GM12878 (cell line): ENCODE measurements at regions of chr17 and their contacts with region 1.

Region 1: DNA sequence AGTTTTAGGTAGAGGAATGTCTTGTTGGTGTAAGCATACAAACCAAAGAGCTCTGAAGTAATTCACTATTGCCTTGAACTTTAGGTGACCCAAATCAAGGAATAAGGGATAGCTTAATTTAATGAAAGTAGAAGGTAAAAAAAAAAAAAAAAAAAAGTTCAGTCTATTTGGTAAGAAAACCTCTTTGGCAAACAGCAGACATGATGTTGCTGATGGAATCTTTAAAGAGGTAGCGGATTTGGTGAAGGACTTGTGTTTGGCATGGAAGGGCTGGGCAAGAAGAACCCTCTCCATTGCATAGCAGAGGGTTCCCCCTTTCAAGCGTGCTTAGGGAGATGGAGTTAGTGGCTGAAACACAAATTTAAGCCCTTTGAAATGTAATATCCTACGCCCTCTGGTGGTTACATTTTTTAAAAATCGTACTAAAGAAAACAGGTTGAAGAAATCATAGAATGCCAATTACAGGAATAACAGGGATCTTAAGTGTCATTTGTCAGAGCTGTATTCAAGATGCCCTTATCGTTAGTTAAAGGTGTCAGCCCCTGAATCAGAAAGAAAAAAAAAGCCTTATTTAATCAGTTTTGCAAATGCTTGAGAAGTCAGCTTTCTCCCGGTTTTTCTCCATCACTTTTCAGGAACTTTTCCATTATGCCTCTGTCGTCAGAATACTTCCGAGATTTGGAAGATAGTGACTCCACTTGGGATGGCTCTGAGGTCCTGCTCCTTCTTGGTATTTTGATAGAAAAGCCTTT is 383.1 kb downstream of the KCNJ2 start:
- DNase-seq: peak; percentile 13
- ATAC-seq: peak; percentile 68
- H3K4me3 ChIP-seq: no peak overlapping the region
- H3K27ac ChIP-seq: no peak overlapping the region
- H3K4me1 ChIP-seq: no peaks in the 10 kb centered on the region
- H3K27me3 ChIP-seq: no peaks in the 10 kb centered on the region
- CTCF ChIP-seq: peak; percentile 24 to 54 (median 31); a peak in 4 of 6 replicates
- EP300 ChIP-seq: no peak
- POLR2A ChIP-seq: no peak
- RAD21 ChIP-seq: peak; percentile 64

Region 2: DNA sequence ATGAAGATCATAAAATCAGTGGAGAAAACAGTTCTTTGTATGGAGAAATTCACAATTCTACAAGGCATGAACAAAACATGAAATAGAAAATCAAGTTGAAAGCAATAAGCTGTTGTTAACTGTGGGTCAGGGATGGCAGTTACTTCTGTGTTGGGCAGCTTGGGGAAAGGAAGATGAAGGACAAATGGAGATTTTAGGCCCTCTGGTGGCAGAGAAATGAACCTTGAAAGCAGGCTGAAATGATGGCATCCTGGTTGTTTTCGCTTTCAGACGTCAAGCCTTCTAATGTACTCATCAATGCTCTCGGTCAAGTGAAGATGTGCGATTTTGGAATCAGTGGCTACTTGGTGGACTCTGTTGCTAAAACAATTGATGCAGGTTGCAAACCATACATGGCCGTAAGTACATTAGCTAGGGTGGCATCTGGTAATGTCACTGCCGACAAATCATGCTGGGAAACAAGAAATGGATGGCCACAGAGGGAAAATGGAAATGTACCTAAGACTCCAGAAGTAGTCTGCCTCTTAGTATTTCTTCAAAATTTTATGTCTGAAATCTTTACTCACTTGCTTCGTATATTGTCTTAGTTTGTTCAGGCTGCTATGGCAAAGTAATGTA is 1029.1 kb before region 1 on chr17:
- CTCF ChIA-PET with region 1: interaction called, 14 read pairs
- POLR2A ChIA-PET with region 1: no interaction called
- RAD21 ChIA-PET with region 1: interaction called, 3 read pairs
- SMC1A ChIA-PET with region 1: interaction called, 5 read pairs
- in situ Hi-C with region 1: no loop called
- intact Hi-C with region 1: loop called (anchors 5 kb)
- DNase-seq: peak; percentile 55
- ATAC-seq: peak; percentile 91
- H3K4me3 ChIP-seq: no peak overlapping the region
- H3K27ac ChIP-seq: no peak overlapping the region
- H3K4me1 ChIP-seq: peaks cover 10% of the 10 kb centered on the region; the same call in 1 of the 2 replicates
- H3K27me3 ChIP-seq: no peaks in the 10 kb centered on the region
- CTCF ChIP-seq: peak; percentile 73 to 76 (median 74)
- EP300 ChIP-seq: no peak
- POLR2A ChIP-seq: no peak
- RAD21 ChIP-seq: peak; percentile 84

Region 3: GRCh38 chr17:69607162-69607834 is 945.1 kb before region 1 on chr17:
- CTCF ChIA-PET with region 1: interaction called, 76 read pairs
- POLR2A ChIA-PET with region 1: no interaction called
- RAD21 ChIA-PET with region 1: interaction called, 40 read pairs
- SMC1A ChIA-PET with region 1: interaction called, 51 read pairs
- in situ Hi-C with region 1: no loop called
- intact Hi-C with region 1: loop called (anchors 5 kb)
- DNase-seq: peak; percentile 45
- ATAC-seq: peak; percentile 96
- H3K4me3 ChIP-seq: no peak overlapping the region
- H3K27ac ChIP-seq: peak overlapping the region; percentile 50; the same call in 1 of the 2 replicates
- H3K4me1 ChIP-seq: peaks cover 2% of the 10 kb centered on the region; the same call in 1 of the 2 replicates
- H3K27me3 ChIP-seq: no peaks in the 10 kb centered on the region
- CTCF ChIP-seq: peak; percentile 75 to 86 (median 85)
- EP300 ChIP-seq: no peak
- POLR2A ChIP-seq: no peak
- RAD21 ChIP-seq: peak; percentile 82

Region 4: GRCh38 chr17:70144260-70144846 is 408.1 kb before region 1 on chr17:
- CTCF ChIA-PET with region 1: interaction called, 21 read pairs
- POLR2A ChIA-PET with region 1: no interaction called
- RAD21 ChIA-PET with region 1: interaction called, 5 read pairs
- SMC1A ChIA-PET with region 1: interaction called, 12 read pairs
- in situ Hi-C with region 1: no loop called
- intact Hi-C with region 1: loop called (anchors 5 kb)
- DNase-seq: no peak
- ATAC-seq: no peak
- H3K4me3 ChIP-seq: no peak overlapping the region
- H3K27ac ChIP-seq: no peak overlapping the region
- H3K4me1 ChIP-seq: no peaks in the 10 kb centered on the region
- H3K27me3 ChIP-seq: no peaks in the 10 kb centered on the region
- CTCF ChIP-seq: peak; percentile 44 to 58 (median 45); a peak in 4 of 6 replicates
- EP300 ChIP-seq: no peak
- POLR2A ChIP-seq: no peak
- RAD21 ChIP-seq: peak; percentile 62

Region 5: DNA sequence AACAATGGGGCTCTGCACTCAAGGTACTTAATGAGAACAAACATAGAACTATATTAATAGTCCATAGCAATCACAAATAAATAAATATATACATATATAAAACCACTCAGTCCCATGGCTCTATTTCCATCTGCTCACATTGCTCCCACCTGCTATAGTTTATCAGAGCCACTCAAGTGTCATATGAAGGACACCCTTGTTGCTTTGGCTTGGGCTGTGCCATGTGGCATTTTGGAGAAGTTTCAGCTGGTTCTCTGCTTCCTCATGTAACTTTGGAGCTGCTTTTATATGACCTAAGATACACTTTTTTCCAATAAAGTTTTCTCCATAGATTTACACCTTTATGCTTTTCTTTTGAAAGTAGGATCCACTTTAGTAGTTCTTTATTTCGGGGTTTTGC is 256.7 kb before region 1 on chr17:
- CTCF ChIA-PET with region 1: no interaction called
- POLR2A ChIA-PET with region 1: no interaction called
- RAD21 ChIA-PET with region 1: interaction called, 4 read pairs
- SMC1A ChIA-PET with region 1: interaction called, 11 read pairs
- in situ Hi-C with region 1: no loop called
- intact Hi-C with region 1: no loop called
- DNase-seq: no peak
- ATAC-seq: no peak
- H3K4me3 ChIP-seq: no peak overlapping the region
- H3K27ac ChIP-seq: no peak overlapping the region
- H3K4me1 ChIP-seq: no peaks in the 10 kb centered on the region
- H3K27me3 ChIP-seq: no peaks in the 10 kb centered on the region
- CTCF ChIP-seq: no peak
- EP300 ChIP-seq: no peak
- POLR2A ChIP-seq: no peak
- RAD21 ChIP-seq: no peak

Region 6: DNA sequence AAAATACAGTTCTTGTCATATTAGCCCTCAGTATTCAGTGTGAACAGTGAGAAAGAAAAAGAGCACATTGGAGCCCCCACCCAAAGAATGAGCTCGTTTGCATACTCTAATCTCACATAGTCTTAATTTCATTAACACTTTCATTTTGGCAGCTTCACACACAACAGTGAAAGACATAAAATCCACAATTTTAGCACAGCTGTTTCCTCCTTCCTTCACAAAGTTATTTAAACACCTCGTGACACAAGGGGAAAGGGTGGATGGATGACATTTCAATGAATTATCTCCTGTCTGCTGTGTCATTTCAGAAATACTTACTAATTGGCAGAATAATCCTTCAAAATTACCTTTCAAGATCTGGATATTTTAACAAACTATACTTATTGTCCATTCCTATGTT is 83.7 kb before region 1 on chr17:
- CTCF ChIA-PET with region 1: interaction called, 3 read pairs
- POLR2A ChIA-PET with region 1: no interaction called
- RAD21 ChIA-PET with region 1: no interaction called
- SMC1A ChIA-PET with region 1: interaction called, 12 read pairs
- in situ Hi-C with region 1: no loop called
- intact Hi-C with region 1: no loop called
- DNase-seq: no peak
- ATAC-seq: no peak
- H3K4me3 ChIP-seq: no peak overlapping the region
- H3K27ac ChIP-seq: no peak overlapping the region
- H3K4me1 ChIP-seq: no peaks in the 10 kb centered on the region
- H3K27me3 ChIP-seq: no peaks in the 10 kb centered on the region
- CTCF ChIP-seq: no peak
- EP300 ChIP-seq: no peak
- POLR2A ChIP-seq: no peak
- RAD21 ChIP-seq: no peak

Region 7: GRCh38 chr17:70582777-70583176 is 30.4 kb after region 1 on chr17:
- CTCF ChIA-PET with region 1: no interaction called
- POLR2A ChIA-PET with region 1: no interaction called
- RAD21 ChIA-PET with region 1: no interaction called
- SMC1A ChIA-PET with region 1: no interaction called
- in situ Hi-C with region 1: no loop called
- intact Hi-C with region 1: no loop called
- DNase-seq: no peak
- ATAC-seq: no peak
- H3K4me3 ChIP-seq: no peak overlapping the region
- H3K27ac ChIP-seq: no peak overlapping the region
- H3K4me1 ChIP-seq: no peaks in the 10 kb centered on the region
- H3K27me3 ChIP-seq: no peaks in the 10 kb centered on the region
- CTCF ChIP-seq: no peak
- EP300 ChIP-seq: no peak
- POLR2A ChIP-seq: no peak
- RAD21 ChIP-seq: no peak

Region 8: DNA sequence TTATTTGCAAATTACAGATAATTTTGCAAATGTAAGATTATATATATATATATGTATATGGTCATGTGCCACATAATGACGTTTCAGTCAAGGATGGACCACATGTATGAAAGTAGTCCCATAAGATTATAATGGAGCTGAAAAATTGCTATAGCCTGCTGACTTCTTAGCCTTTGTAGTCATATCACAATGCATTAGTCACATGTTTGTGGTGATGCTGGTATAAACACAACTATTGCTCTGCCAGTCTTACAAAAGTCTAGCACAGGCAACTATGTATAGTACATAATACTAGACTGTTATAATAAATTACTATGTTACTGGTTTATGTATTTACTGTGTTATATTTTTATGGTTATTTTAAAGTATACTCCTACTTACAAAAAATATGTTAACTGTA is 61.3 kb after region 1 on chr17:
- CTCF ChIA-PET with region 1: no interaction called
- POLR2A ChIA-PET with region 1: no interaction called
- RAD21 ChIA-PET with region 1: no interaction called
- SMC1A ChIA-PET with region 1: no interaction called
- in situ Hi-C with region 1: no loop called
- intact Hi-C with region 1: no loop called
- DNase-seq: no peak
- ATAC-seq: no peak
- H3K4me3 ChIP-seq: no peak overlapping the region
- H3K27ac ChIP-seq: no peak overlapping the region
- H3K4me1 ChIP-seq: no peaks in the 10 kb centered on the region
- H3K27me3 ChIP-seq: no peaks in the 10 kb centered on the region
- CTCF ChIP-seq: no peak
- EP300 ChIP-seq: no peak
- POLR2A ChIP-seq: no peak
- RAD21 ChIP-seq: no peak

Region 9: DNA sequence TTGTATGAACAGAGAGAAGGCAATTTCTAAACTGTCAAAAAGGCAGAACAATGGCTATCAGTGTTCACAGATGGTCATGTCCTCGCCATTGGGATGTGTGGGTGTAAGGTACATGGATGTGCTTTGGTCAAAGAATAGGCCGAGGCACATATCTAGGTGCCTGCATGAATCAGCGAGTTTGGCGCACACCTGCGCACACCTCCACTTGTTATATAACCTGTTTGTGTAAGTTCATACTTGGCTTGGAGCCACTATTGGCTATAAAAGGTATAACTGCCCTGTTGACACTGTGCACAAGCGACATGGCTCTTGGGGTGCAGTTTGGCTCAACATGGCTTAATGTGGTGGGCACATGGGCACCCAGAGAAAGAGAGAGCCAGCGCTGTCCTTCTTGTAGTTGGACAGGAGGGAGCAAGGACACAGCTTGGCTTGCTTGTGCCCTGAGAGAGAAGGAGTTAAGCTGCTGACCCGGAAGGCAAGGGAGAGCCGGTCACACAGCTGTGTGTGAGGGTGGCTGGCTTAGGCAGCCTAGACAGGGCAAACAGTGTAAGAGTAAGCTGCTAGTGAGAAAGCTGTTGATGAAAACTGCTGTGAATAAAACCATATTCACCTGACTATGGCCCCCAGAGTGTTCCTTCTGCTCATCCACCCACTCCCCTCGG is 116.0 kb after region 1 on chr17:
- CTCF ChIA-PET with region 1: no interaction called
- POLR2A ChIA-PET with region 1: no interaction called
- RAD21 ChIA-PET with region 1: no interaction called
- SMC1A ChIA-PET with region 1: no interaction called
- in situ Hi-C with region 1: no loop called
- intact Hi-C with region 1: no loop called
- DNase-seq: no peak
- ATAC-seq: no peak
- H3K4me3 ChIP-seq: no peak overlapping the region
- H3K27ac ChIP-seq: no peak overlapping the region
- H3K4me1 ChIP-seq: no peaks in the 10 kb centered on the region
- H3K27me3 ChIP-seq: no peaks in the 10 kb centered on the region
- CTCF ChIP-seq: no peak
- EP300 ChIP-seq: no peak
- POLR2A ChIP-seq: no peak
- RAD21 ChIP-seq: no peak

Region 10: GRCh38 chr17:70875729-70876310 is 323.4 kb after region 1 on chr17:
- CTCF ChIA-PET with region 1: no interaction called
- POLR2A ChIA-PET with region 1: no interaction called
- RAD21 ChIA-PET with region 1: no interaction called
- SMC1A ChIA-PET with region 1: no interaction called
- in situ Hi-C with region 1: no loop called
- intact Hi-C with region 1: no loop called
- DNase-seq: no peak
- ATAC-seq: no peak
- H3K4me3 ChIP-seq: no peak overlapping the region
- H3K27ac ChIP-seq: no peak overlapping the region
- H3K4me1 ChIP-seq: no peaks in the 10 kb centered on the region
- H3K27me3 ChIP-seq: no peaks in the 10 kb centered on the region
- CTCF ChIP-seq: no peak
- EP300 ChIP-seq: no peak
- POLR2A ChIP-seq: no peak
- RAD21 ChIP-seq: no peak